ENCODE measurements at regions of chr10 and their contacts with region 1.

Region 1: GRCh38 chr10:104339469-104340110 is 1.3 kb upstream of the ITPRIP start:
- DNase-seq: no peak
- H3K4me3 ChIP-seq: peak overlapping the region; percentile 85
- CTCF ChIP-seq: no peak

Region 2: GRCh38 chr10:104231784-104232612 is 107.6 kb before region 1 on chr10 and contains the start of gene CFAP43:
- in situ Hi-C with region 1: no loop called
- DNase-seq: peak; percentile 87
- H3K4me3 ChIP-seq: peak within 1 kb of the TSS; percentile 85
- CTCF ChIP-seq: no peak

Region 3: GRCh38 chr10:104288358-104288757 is 51.2 kb before region 1 on chr10:
- in situ Hi-C with region 1: no loop called
- DNase-seq: no peak
- H3K4me3 ChIP-seq: no peak overlapping the region
- CTCF ChIP-seq: no peak

Region 4: GRCh38 chr10:104300736-104301292 is 38.8 kb before region 1 on chr10:
- in situ Hi-C with region 1: loop called (anchors 5 kb)
- DNase-seq: peak; percentile 86
- H3K4me3 ChIP-seq: no peak overlapping the region
- CTCF ChIP-seq: no peak